ENCODE measurements at regions of chr13 and their contacts with region 1.

Region 1: GRCh38 chr13:83881917-83882605 is at the start of gene SLITRK1:
- DNase-seq: peak; percentile 73 to 97 (median 86)

Region 2: GRCh38 chr13:83765796-83766195 is 116.3 kb before region 1 on chr13:
- intact Hi-C with region 1: loop called (anchors 5 kb)
- DNase-seq: peak in 27 of 42 donors; percentile 6 to 83 (median 55)

Region 3: DNA sequence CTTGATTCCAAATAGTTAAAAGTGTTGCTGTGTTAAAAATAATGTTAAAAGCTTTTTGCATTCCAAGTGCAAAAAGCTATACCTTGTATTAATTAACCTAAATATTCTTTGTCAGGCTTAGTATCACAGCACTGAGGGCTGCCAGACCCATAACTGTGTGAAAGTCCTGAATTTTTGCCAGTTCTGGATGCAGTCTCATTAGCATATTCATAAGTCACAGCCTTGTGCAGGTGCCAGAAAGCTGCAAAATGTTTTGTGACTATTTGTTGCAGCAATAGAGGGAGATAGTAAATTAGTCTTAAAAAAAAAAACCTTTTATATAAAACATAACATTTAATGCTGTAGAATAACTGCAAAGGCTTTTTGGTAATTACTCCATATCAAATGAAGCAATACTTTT is 56.4 kb before region 1 on chr13:
- intact Hi-C with region 1: loop called (anchors 10 kb)
- DNase-seq: peak in 37 of 42 donors; percentile 25 to 87 (median 64)

Region 4: DNA sequence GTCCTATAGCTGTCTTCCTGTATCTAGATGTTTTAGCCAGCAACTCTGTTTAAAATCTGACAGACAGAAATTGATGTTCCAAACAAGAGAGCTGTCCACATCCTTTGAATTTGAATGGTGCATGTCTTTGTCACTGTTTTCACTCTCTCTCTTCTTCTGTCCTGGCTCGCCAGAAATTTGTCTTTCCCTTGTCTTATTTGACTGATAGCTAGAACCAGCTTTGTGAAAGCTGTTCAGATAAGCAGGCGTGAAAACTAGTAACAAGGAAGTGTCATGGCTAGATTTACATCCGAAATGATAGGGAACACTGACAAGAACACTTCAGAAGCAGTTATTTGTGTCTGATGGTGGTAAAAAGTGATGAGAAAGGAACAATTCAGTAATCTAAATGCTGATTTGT is 355.1 kb after region 1 on chr13:
- intact Hi-C with region 1: no loop called
- DNase-seq: no peak

Measured in head of caudate nucleus (tissue), 42 donors.